ENCODE measurements at regions of chr20 and their contacts with region 1.

Region 1: GRCh38 chr20:13458860-13459451 is 179.8 kb downstream of the TASP1 start:
- DNase-seq: no peak
- ATAC-seq: peak in 3 of 4 donors; percentile 45 to 72 (median 70)
- H3K4me3 ChIP-seq: no peak overlapping the region
- H3K27ac ChIP-seq: no peak overlapping the region
- H3K4me1 ChIP-seq: peaks cover 0 to 4% (median 0%) of the 10 kb centered on the region in 12 donors
- H3K27me3 ChIP-seq: no peaks in the 10 kb centered on the region
- CTCF ChIP-seq: peak; percentile 57 to 80 (median 68)
- POLR2A ChIP-seq: no peak

Region 2: GRCh38 chr20:13525225-13525940 is 66.4 kb after region 1 on chr20:
- intact Hi-C with region 1: no loop called
- DNase-seq: no peak
- ATAC-seq: peak in 2 of 4 donors; percentile 60 to 75
- H3K4me3 ChIP-seq: no peak overlapping the region
- H3K27ac ChIP-seq: no peak overlapping the region
- H3K4me1 ChIP-seq: no peaks in the 10 kb centered on the region
- H3K27me3 ChIP-seq: no peaks in the 10 kb centered on the region
- CTCF ChIP-seq: no peak
- POLR2A ChIP-seq: no peak

Region 3: DNA sequence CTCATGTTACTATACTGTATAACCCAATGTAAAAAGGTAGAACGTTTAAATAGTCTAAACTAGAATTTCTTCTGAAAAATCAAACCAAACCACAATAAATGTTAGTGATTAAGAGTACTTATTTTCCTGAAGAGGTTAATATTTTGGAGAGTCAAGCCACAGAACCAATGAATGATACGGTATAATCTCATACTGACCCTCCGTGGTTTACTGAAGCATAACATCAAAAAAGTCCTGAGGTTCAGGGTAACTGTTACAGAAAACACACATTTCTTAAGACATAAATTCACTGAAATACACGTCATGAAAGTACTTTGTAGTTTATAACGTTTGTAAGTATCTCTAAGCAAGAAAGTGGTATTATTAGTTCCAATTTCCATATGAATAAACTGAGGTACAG is 296.9 kb after region 1 on chr20:
- intact Hi-C with region 1: loop called in 1 of 10 experiments (anchors 10 kb)
- DNase-seq: no peak
- ATAC-seq: no peak
- H3K4me3 ChIP-seq: no peak overlapping the region
- H3K27ac ChIP-seq: no peak overlapping the region
- H3K4me1 ChIP-seq: no peaks in the 10 kb centered on the region
- H3K27me3 ChIP-seq: no peaks in the 10 kb centered on the region
- CTCF ChIP-seq: peak in 5 of 12 donors; percentile 12 to 25 (median 15)
- POLR2A ChIP-seq: no peak

Measured in heart left ventricle (tissue), 16 donors.